ENCODE measurements at regions of chr10 and their contacts with region 1.

Region 1: DNA sequence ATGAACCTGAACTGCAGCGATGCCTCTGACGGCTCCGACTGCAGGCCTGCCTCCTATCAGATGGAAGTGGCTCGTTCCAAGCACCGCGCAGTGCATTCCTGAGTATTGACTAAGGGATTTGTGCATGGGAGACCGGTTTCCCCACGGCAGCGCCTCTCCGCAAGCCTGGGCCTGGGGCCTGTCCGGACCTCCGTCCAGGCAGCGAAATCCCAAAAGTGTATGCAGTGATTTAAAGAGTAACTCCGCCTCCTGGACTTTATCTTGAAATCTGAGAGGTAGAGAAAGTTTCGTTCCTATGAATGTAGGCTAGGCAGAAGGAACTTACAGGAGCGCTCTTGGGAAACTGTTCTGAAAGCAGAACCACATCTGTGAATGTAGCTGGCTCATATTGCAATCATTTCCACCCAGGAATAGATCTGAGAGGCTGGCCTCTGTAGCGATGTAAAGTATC is 106.2 kb upstream of the CELF2 start:
- DNase-seq: peak; percentile 19 to 91
- H3K4me3 ChIP-seq: peak overlapping the region; percentile 33 to 59
- H3K27ac ChIP-seq: peak overlapping the region; percentile 75 to 79
- H3K4me1 ChIP-seq: peaks cover 0 to 19% of the 10 kb centered on the region in 2 donors
- H3K27me3 ChIP-seq: no peaks in the 10 kb centered on the region
- CTCF ChIP-seq: no peak

Region 2: DNA sequence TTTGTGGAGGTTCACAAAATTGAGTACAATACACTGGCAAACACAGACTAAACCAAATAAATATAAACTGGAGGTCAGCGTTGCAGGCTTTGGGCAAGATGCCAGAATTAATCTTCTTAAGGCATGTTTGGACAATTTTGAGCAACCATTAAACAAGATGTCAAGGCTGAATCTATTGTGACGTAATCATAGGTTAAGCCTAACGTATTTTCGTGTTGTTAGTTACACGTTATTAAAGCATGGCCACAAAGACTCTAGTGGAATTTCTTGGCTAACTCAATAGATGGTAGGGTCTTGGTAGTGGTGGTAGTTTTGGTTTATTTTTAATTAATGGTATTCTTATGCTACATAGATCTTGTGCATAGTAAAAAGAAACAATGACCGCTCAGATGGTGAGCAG is 843.2 kb before region 1 on chr10:
- intact Hi-C with region 1: no loop called
- DNase-seq: no peak
- H3K4me3 ChIP-seq: no peak overlapping the region
- H3K27ac ChIP-seq: no peak overlapping the region
- H3K4me1 ChIP-seq: no peaks in the 10 kb centered on the region
- H3K27me3 ChIP-seq: no peaks in the 10 kb centered on the region
- CTCF ChIP-seq: no peak

Region 3: DNA sequence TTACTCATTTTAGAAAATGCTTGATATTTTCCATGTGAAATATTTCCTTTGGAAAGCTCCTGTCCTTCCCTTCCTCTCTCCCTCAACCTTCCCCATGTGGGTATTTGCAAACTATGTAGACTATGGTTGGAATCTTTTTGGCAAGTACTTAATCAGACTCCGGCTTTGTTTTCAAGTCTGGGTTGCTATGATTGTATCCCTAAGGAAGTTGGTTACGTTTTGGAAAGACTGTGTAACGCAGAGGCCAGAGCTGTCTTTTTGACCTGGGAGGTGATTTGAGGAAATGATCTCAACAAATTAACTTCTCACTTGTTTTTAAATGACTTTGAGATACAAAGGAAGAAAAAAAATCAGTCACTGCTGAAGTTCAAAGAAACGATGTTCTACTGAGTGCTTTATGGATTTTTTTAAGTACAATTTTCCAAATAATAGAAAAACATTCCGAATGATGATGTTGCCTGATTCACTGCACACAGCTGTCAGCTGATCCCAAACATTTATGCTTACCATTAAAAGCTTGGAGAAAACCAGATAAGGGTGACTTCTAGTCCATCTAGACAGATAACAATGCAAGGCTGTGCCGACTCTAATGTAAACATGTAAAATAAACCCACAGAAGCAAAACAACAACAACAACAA is 39.3 kb before region 1 on chr10:
- intact Hi-C with region 1: loop called (anchors 2 kb)
- DNase-seq: peak in 1 of 2 donors; percentile 84
- H3K4me3 ChIP-seq: peak overlapping the region in 1 of 2 donors; percentile 7
- H3K27ac ChIP-seq: peak overlapping the region; percentile 83 to 88
- H3K4me1 ChIP-seq: peaks cover 0 to 33% of the 10 kb centered on the region in 2 donors
- H3K27me3 ChIP-seq: no peaks in the 10 kb centered on the region
- CTCF ChIP-seq: no peak